Esophagus muscularis mucosa (tissue), 4 donors: ENCODE measurements at regions of chr2 and their contacts with region 1.

Region 1: DNA sequence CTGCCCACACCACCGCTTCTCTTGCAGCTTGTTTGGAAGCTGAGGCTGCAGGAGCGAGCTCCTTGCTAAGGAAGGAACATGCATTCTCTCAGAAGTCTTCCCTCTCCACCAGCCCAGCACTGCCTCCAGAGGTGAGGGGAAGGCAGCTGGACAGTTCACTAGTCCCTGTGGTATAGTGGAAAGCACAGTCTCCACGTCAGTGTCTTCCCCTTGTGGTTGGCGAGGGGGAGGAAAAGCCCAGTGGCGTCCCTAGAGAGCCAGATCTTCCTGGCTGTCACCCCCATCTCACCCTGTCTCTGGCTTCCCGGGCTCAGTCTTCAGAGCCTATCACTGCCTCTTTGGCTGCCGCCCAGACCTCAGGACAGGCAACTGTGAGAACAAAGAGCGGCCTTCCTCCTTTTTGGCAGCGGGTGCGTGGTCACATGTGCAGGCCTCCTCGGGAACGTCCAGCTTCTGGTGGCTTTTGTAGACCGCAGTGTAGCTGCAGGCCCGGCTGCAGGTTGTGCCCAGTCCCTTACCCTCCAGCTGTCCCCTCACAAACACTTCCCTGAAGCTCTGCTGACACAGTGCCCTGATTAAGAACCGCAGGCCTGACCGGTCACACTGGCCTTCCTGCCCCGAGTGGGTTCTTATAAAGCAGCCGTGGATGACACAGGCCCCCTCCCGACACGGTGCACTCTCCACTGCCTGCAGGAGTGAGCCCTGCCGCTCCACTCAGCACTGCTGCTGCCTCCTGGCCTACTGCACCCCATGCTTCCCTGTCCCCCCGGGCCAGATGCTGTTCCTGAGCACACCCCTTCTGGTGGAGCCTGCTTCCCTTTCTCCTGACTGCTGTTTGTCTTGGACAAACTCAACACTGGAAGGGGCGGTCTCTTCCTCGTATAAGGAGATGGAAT is 90.9 kb downstream of the RNF144A start:
- DNase-seq: no peak
- H3K4me3 ChIP-seq: peak overlapping the region in 2 of 4 donors; percentile 7 to 19
- H3K27ac ChIP-seq: peak overlapping the region; percentile 61 to 77 (median 68)
- H3K4me1 ChIP-seq: peaks cover 42 to 63% (median 52%) of the 10 kb centered on the region in 4 donors
- H3K27me3 ChIP-seq: no peaks in the 10 kb centered on the region
- CTCF ChIP-seq: peak in 1 of 3 experiments; percentile 42
- EP300 ChIP-seq: no peak
- POLR2A ChIP-seq: no peak

Region 2: GRCh38 chr2:6917071-6917760 is 90.9 kb before region 1 on chr2 and contains the start of gene RNF144A:
- intact Hi-C with region 1: loop called (anchors 5 kb)
- DNase-seq: no peak
- H3K4me3 ChIP-seq: peak within 1 kb of the TSS; percentile 74 to 90 (median 78)
- H3K27ac ChIP-seq: peak within 1 kb of the TSS; percentile 64 to 80 (median 70)
- H3K4me1 ChIP-seq: peaks cover 18 to 39% (median 29%) of the 10 kb centered on the region in 4 donors
- H3K27me3 ChIP-seq: no peaks in the 10 kb centered on the region
- CTCF ChIP-seq: peak; percentile 33 to 57 (median 50)
- EP300 ChIP-seq: no peak
- POLR2A ChIP-seq: no peak
- total RNA-seq, gene RNF144A: 5.4 to 10.8 (median 8.8) TPM